AG04450 (cell line): ENCODE measurements at regions of chr1 and their contacts with region 1.

Region 1: DNA sequence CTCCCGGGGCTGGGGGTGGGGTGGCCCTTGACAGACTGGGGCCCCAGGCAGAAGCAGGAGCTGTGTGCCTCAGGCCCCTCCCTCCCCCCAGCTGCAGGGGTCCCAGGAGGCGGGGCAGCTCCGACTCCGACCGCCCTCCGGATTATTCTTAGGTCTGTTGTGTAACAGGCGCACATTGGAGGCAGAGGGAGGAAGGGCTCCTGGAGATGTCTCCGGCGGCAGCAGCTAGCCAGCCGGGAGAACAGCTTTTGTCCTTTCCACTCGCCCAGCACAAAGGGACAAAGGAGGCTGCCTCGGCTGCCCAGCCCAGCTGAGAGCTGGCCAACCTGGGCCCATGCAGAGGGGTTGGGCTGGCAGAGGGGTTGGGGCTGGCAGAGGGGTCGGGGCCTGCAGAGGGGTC is 29.7 kb upstream of the PLCH2 start:
- DNase-seq: no peak
- H3K4me3 ChIP-seq: no peak overlapping the region
- H3K27ac ChIP-seq: no peak overlapping the region
- H3K27me3 ChIP-seq: peaks cover 24% of the 10 kb centered on the region
- CTCF ChIP-seq: no peak

Region 2: GRCh38 chr1:2391041-2391930 is 55.1 kb before region 1 on chr1 and contains the starts of genes MORN1 and RER1:
- CTCF ChIA-PET with region 1: no interaction called
- POLR2A ChIA-PET with region 1: interaction called, 13 read pairs
- DNase-seq: peak; percentile 97
- H3K4me3 ChIP-seq: peak within 1 kb of the TSS; percentile 87
- H3K27ac ChIP-seq: no peak within 1 kb of the TSS
- H3K27me3 ChIP-seq: no peaks in the 10 kb centered on the region
- CTCF ChIP-seq: no peak
- polyA plus RNA-seq, gene MORN1: 3.0 and 3.6 TPM in 2 replicates
- polyA plus RNA-seq, gene RER1: 312 and 324 TPM in 2 replicates